Activated CD8-positive, alpha-beta T cell treated with anti-CD3 and anti-CD28 coated beads for 36 hours (primary cell): ENCODE measurements at regions of chr6 and their contacts with region 1.

Region 1: GRCh38 chr6:41705996-41706835 is 29.2 kb downstream of the TFEB start:
- DNase-seq: peak; percentile 92
- ATAC-seq: peak; percentile 93
- H3K4me3 Mint-ChIP-seq: peak overlapping the region; percentile 61
- H3K27ac Mint-ChIP-seq: peak overlapping the region; percentile 96
- H3K4me1 Mint-ChIP-seq: peaks cover 34% of the 10 kb centered on the region
- H3K27me3 Mint-ChIP-seq: no peaks in the 10 kb centered on the region
- CTCF ChIP-seq: peak; percentile 85

Region 2: DNA sequence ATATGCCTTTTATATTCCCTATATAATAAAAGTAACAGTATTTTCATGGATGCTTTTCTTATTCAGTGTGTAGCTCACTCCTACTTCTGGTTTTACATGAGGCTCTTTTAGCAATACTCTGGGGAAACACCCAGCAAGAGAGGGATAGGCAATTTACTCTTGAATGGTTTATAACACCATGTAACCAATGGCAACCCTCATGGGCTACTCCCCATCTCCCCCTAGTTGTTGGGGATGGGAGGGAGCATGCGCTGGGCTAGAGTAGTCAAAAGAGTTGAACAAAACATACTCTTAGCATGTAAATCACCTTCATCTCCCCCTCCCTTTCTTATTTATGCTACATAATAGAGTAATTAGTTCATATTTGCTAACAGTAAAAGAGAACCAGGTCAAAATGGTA is 978.9 kb before region 1 on chr6:
- CTCF ChIA-PET with region 1: no interaction called
- POLR2A ChIA-PET with region 1: no interaction called
- intact Hi-C with region 1: no loop called
- DNase-seq: no peak
- ATAC-seq: no peak
- H3K4me3 Mint-ChIP-seq: no peak overlapping the region
- H3K27ac Mint-ChIP-seq: no peak overlapping the region
- H3K4me1 Mint-ChIP-seq: no peaks in the 10 kb centered on the region
- H3K27me3 Mint-ChIP-seq: no peaks in the 10 kb centered on the region
- CTCF ChIP-seq: no peak

Region 3: GRCh38 chr6:41683510-41684310 is 22.5 kb before region 1 on chr6:
- CTCF ChIA-PET with region 1: interaction called, 21 read pairs
- POLR2A ChIA-PET with region 1: interaction called, 4 read pairs
- intact Hi-C with region 1: no loop called
- DNase-seq: peak; percentile 87
- ATAC-seq: peak; percentile 93
- H3K4me3 Mint-ChIP-seq: peak overlapping the region; percentile 70
- H3K27ac Mint-ChIP-seq: peak overlapping the region; percentile 68
- H3K4me1 Mint-ChIP-seq: peaks cover 5% of the 10 kb centered on the region
- H3K27me3 Mint-ChIP-seq: peaks cover 1% of the 10 kb centered on the region
- CTCF ChIP-seq: peak; percentile 86

Region 4: GRCh38 chr6:41716516-41717391 is 10.5 kb after region 1 on chr6:
- CTCF ChIA-PET with region 1: interaction called, 30 read pairs
- POLR2A ChIA-PET with region 1: interaction called, 4 read pairs
- intact Hi-C with region 1: no loop called
- DNase-seq: no peak
- ATAC-seq: no peak
- H3K4me3 Mint-ChIP-seq: no peak overlapping the region
- H3K27ac Mint-ChIP-seq: peak overlapping the region; percentile 52
- H3K4me1 Mint-ChIP-seq: peaks cover 29% of the 10 kb centered on the region
- H3K27me3 Mint-ChIP-seq: no peaks in the 10 kb centered on the region
- CTCF ChIP-seq: no peak

Region 5: GRCh38 chr6:41735427-41736356 is 29.5 kb after region 1 on chr6 and contains the start of gene TFEB:
- CTCF ChIA-PET with region 1: interaction called, 29 read pairs
- POLR2A ChIA-PET with region 1: interaction called, 8 read pairs
- intact Hi-C with region 1: no loop called
- DNase-seq: peak; percentile 96
- ATAC-seq: peak; percentile 74
- H3K4me3 Mint-ChIP-seq: peak within 1 kb of the TSS; percentile 84
- H3K27ac Mint-ChIP-seq: no peak within 1 kb of the TSS
- H3K4me1 Mint-ChIP-seq: peaks cover 25% of the 10 kb centered on the region
- H3K27me3 Mint-ChIP-seq: no peaks in the 10 kb centered on the region
- CTCF ChIP-seq: peak; percentile 77
- total RNA-seq, gene TFEB: 14.6 to 15.9 TPM

Region 6: GRCh38 chr6:41763470-41763869 is 57.3 kb after region 1 on chr6:
- CTCF ChIA-PET with region 1: no interaction called
- POLR2A ChIA-PET with region 1: no interaction called
- intact Hi-C with region 1: no loop called
- DNase-seq: no peak
- ATAC-seq: no peak
- H3K4me3 Mint-ChIP-seq: no peak overlapping the region
- H3K27ac Mint-ChIP-seq: no peak overlapping the region
- H3K4me1 Mint-ChIP-seq: peaks cover 4% of the 10 kb centered on the region
- H3K27me3 Mint-ChIP-seq: peaks cover 5% of the 10 kb centered on the region
- CTCF ChIP-seq: no peak

Region 7: DNA sequence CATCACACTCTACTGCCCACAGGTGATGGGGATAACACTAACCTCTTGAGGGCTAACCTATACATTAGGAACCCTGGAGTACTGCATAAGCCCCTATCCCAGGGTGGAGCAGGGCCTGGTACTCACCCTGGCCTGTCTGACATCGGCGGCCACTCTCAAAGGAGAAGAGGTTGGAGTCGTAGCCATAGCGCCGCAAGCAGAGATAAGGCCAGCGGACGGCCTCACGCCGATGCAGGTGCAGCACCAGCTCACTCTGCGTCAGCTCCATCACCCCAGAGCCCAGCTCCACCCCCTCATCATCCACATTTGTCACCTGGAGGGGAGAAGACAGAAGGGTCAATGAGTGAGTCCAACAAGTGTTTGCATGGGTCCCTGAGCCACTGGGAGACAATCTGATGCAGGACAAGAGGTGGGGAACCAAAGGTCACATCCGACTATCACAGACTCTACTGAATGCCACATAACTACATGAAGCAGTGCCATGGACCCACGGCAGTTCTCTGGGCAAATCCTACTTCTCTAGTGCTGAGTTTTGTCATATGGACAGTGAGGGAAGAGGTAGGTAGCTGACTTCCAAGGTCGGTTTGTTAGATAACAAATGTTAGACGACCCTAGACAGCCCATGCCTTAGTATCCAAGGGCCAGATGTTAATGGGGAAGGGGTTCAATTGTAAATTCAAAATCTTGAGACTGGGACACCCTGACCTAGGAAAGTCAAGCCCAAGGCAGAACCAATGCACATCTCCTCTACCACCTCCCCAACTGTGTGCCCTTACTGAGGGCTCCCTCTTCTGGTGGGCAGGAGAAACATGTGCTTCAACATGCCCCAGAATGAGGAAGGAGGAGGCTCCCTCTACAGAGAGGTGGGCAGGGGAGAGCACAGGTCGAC is 69.3 kb after region 1 on chr6:
- CTCF ChIA-PET with region 1: interaction called, 11 read pairs
- POLR2A ChIA-PET with region 1: no interaction called
- intact Hi-C with region 1: no loop called
- DNase-seq: peak; percentile 51
- ATAC-seq: peak; percentile 41
- H3K4me3 Mint-ChIP-seq: no peak overlapping the region
- H3K27ac Mint-ChIP-seq: no peak overlapping the region
- H3K4me1 Mint-ChIP-seq: peaks cover 12% of the 10 kb centered on the region
- H3K27me3 Mint-ChIP-seq: no peaks in the 10 kb centered on the region
- CTCF ChIP-seq: peak; percentile 74

Region 8: DNA sequence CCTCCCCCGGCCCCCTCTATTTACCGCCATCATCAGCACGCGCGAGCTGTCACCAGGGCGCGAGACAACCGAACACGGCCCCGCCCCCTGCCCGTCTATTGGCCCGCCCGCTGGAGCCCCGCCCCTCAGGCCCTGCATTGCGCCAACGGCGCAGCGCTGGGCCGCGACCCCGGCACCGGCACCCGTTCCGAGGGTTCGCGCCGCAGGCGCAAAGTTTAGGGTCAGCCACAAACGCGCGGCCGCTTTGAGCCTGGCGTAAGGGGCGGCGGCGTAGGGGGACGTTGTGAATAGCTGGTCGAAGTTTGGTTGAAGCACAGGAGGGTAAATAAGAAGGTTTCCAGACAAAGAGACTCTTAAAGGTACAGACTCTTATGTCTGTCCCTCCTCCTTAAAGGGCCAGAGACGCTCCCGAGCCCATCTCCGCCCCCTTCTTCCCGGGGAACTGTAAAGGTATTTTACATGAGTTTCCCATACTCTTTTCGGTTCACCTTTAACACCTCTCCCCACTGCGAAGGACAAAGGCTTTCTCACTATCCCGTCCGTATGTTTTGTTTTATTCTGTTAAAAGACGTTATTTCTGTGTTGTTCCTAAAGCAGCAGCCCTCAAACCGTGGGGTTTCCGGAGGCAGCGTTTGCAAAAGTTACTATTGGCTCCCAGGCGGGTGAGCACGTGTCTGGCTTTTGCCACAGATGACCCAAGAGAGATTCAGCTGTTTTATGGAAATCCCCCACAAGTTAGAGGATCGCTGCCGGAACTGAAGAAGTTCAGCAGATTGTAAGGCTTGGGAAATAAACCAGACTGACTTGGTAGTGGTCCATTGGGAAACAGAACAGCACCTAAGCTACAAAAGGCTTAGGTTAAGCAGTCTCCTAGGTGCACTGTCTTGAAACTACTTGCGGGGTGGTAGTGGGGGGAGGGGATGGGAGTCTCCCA is 189.4 kb after region 1 on chr6 and contains the start of gene USP49:
- CTCF ChIA-PET with region 1: no interaction called
- POLR2A ChIA-PET with region 1: no interaction called
- intact Hi-C with region 1: no loop called
- DNase-seq: peak; percentile 96
- ATAC-seq: peak; percentile 95
- H3K4me3 Mint-ChIP-seq: no peak within 1 kb of the TSS
- H3K27ac Mint-ChIP-seq: peak within 1 kb of the TSS; percentile 90
- H3K4me1 Mint-ChIP-seq: peaks cover 7% of the 10 kb centered on the region
- H3K27me3 Mint-ChIP-seq: no peaks in the 10 kb centered on the region
- CTCF ChIP-seq: no peak
- total RNA-seq, gene USP49: 5.7 to 5.9 TPM

Region 9: GRCh38 chr6:42453031-42453653 is 746.9 kb after region 1 on chr6:
- CTCF ChIA-PET with region 1: no interaction called
- POLR2A ChIA-PET with region 1: no interaction called
- intact Hi-C with region 1: no loop called
- DNase-seq: peak; percentile 82
- ATAC-seq: peak; percentile 72
- H3K4me3 Mint-ChIP-seq: peak overlapping the region; percentile 97
- H3K27ac Mint-ChIP-seq: peak overlapping the region; percentile 85
- H3K4me1 Mint-ChIP-seq: peaks cover 34% of the 10 kb centered on the region
- H3K27me3 Mint-ChIP-seq: peaks cover 4% of the 10 kb centered on the region
- CTCF ChIP-seq: no peak